HEK293 (cell line): ENCODE measurements at regions of chr22 and their contacts with region 1.

Region 1: DNA sequence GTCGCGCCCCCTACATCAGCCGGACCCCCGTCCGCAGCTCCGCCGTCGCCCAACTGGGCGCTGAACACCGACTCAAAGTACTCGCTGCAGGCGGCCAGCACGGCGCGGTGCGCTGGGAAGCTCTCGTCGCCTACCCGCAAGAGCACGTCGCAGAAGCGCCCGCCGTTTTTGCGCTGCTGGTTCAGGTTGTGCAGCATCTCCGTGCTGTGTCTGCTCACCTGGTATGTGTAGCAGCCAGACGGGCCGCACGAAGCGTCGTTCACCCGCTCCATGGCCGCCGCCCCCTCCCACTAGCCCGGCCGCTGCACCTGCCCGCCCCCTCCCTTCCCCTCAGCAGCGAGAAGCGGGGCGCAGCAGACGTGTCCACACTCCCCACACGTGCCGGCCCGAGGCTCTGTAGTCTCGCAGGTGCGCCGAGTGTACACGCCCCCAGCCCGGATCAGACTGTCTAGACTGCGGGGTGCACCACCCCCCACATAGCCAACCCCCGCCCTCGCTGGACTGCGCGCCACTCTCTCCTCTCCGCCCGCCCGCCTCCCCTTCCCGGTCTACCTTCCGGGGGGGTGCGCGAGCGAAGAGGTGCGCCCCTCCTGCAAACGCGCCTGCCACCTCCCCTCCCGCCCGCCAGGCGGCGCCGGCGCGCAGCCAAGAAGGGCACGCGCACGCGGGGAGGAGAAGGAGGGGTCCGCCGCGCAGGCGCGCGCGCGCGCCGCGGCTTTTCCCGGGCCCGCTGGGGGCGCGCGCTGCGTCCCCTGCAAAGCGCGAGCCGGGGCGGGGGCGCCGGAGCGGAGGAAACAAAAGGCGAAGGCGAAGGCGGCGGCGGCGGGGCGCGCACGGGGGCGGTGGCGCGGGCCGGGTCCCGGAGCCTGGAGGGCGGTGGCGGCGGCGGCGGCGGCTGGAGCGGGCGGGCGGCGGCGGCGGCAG is 553 bp downstream of the PATZ1 start:
- H3K4me3 ChIP-seq: peak overlapping the region; percentile 70
- H3K27ac ChIP-seq: peak overlapping the region; percentile 92
- H3K4me1 ChIP-seq: peaks cover 23% of the 10 kb centered on the region
- CTCF ChIP-seq: peak; percentile 95

Region 2: DNA sequence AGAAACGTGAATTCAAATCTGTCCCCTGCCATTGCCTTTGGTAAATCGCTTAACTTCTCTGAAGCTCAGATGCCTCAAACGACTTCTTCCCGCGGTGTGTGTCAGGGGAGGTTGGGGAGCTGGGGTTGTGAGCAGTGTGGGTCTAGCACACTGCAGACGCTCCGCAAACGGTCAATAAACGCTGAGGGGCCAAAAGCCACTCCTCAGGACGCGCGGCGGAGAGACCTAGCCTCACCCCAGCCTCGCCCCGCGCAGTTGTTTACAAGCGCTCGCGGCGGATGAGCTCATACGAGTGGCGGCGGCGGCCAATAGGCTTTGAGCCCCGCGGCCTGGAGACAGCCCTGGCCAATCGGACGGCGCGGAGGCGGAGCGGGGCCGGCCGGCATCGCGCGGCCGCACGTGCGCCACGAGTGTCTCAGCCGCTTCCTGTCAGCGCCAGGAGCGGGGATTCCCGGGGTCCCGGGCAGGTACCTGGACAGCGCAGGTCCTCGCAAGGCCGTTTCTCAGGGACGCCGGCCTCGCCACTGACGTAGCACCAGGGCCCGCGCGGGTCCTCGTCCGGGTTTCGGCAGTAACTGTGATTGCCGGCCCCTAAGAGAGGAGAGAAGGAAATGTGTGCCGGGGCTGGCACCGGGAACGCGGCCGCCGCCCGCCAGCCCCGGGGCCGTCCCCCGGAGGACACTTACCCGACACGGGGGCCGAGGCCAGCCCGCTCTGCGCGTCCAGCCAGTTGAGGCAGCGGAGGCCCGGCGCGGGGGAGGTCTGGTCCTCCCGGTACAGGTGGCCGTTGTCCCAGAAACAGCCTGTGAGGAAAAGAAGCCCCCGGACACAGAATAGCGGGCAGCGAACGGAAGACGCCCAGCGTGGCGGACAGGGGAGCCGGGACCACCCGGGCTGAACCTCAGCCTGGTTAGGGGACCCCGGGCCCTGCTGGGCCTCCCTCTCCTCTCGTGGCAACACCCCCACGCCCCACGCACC is 54.8 kb before region 1 on chr22:
- CTCF ChIA-PET with region 1: no interaction called
- POLR2A ChIA-PET with region 1: interaction called, 14 read pairs
- H3K4me3 ChIP-seq: peak overlapping the region; percentile 50
- H3K27ac ChIP-seq: peak overlapping the region; percentile 54; the same call in 1 of the 2 replicates
- H3K4me1 ChIP-seq: peaks cover 11% of the 10 kb centered on the region; the same call in 1 of the 2 replicates
- CTCF ChIP-seq: no peak

Region 3: GRCh38 chr22:31361743-31362142 is 16.1 kb after region 1 on chr22:
- CTCF ChIA-PET with region 1: interaction called, 4 read pairs
- POLR2A ChIA-PET with region 1: interaction called, 10 read pairs
- H3K4me3 ChIP-seq: no peak overlapping the region
- H3K27ac ChIP-seq: no peak overlapping the region
- H3K4me1 ChIP-seq: no peaks in the 10 kb centered on the region
- CTCF ChIP-seq: no peak

Region 4: GRCh38 chr22:31399211-31400028 is 53.8 kb after region 1 on chr22 and contains the start of gene DRG1:
- CTCF ChIA-PET with region 1: interaction called, 4 read pairs
- POLR2A ChIA-PET with region 1: interaction called, 63 read pairs
- H3K4me3 ChIP-seq: peak within 1 kb of the TSS; percentile 73
- H3K27ac ChIP-seq: peak within 1 kb of the TSS; percentile 71
- H3K4me1 ChIP-seq: peaks cover 9% of the 10 kb centered on the region
- CTCF ChIP-seq: peak; percentile 40